CD8-positive, alpha-beta memory T cell (primary cell): ENCODE measurements at regions of chr15 and their contacts with region 1.

Region 1: DNA sequence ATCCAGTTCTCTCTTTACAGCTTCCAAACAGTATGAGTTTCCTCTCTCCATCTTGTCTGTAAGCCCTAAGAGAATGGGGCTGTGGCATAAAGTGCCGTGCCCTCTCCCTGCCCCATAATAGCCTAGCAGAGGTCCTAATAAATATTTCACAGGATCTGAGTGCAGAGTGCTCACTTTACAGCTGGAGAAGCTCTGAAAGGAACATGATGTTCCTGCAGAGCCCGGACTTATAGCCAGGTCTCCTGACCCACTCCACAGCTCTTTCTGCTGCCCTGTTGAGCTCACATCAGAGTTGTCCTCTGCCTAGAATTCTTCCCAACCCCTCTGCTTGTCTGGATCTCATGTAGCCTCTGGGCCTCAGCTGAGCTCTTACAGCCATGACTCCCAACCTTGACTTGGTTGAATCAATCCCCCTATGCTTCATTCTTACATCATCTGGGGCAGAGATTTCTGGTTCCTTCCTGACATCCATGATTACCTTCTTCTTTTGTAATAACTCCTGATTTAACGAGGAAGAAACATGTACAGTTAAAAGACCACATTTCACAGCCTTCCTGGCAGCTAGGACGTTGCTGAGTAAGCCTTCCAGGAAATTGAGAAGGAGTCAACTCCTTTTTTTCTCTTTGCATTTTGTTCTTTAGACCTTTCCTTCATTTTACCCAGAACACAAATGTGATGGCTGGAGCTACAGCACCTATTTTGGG is 135.3 kb downstream of the RPLP1 start:
- DNase-seq: peak in 1 of 5 donors; percentile 1
- H3K4me3 ChIP-seq: no peak overlapping the region
- H3K4me3 Mint-ChIP-seq: no peak overlapping the region
- H3K27ac ChIP-seq: no peak overlapping the region
- H3K27ac Mint-ChIP-seq: peak overlapping the region in 1 of 8 donors; percentile 77
- H3K4me1 ChIP-seq: no peaks in the 10 kb centered on the region
- H3K4me1 Mint-ChIP-seq: peaks cover 7 to 11% (median 10%) of the 10 kb centered on the region in 3 donors
- H3K27me3 ChIP-seq: no peaks in the 10 kb centered on the region
- H3K27me3 Mint-ChIP-seq: peaks cover 0 to 1% of the 10 kb centered on the region in 2 donors

Region 2: GRCh38 chr15:69014454-69014853 is 573.4 kb before region 1 on chr15 and contains the start of gene NOX5:
- CTCF ChIA-PET with region 1: no interaction called
- POLR2A ChIA-PET with region 1: no interaction called
- DNase-seq: no peak
- H3K4me3 ChIP-seq: no peak within 1 kb of the TSS
- H3K4me3 Mint-ChIP-seq: no peak within 1 kb of the TSS
- H3K27ac ChIP-seq: no peak within 1 kb of the TSS
- H3K27ac Mint-ChIP-seq: no peak within 1 kb of the TSS
- H3K4me1 ChIP-seq: no peaks in the 10 kb centered on the region
- H3K4me1 Mint-ChIP-seq: no peaks in the 10 kb centered on the region
- H3K27me3 ChIP-seq: no peaks in the 10 kb centered on the region
- H3K27me3 Mint-ChIP-seq: peaks cover 24 to 31% of the 10 kb centered on the region in 2 donors
- total RNA-seq, gene NOX5: not detected

Region 3: GRCh38 chr15:69576035-69576526 is 11.8 kb before region 1 on chr15:
- CTCF ChIA-PET with region 1: interaction called, 13 read pairs
- POLR2A ChIA-PET with region 1: no interaction called
- DNase-seq: peak; percentile 47 to 80 (median 51)
- H3K4me3 ChIP-seq: no peak overlapping the region
- H3K4me3 Mint-ChIP-seq: peak overlapping the region in 1 of 7 donors; percentile 14
- H3K27ac ChIP-seq: no peak overlapping the region
- H3K27ac Mint-ChIP-seq: peak overlapping the region in 2 of 8 donors; percentile 62 to 85
- H3K4me1 ChIP-seq: peaks cover 22% of the 10 kb centered on the region
- H3K4me1 Mint-ChIP-seq: peaks cover 22 to 37% (median 31%) of the 10 kb centered on the region in 3 donors
- H3K27me3 ChIP-seq: no peaks in the 10 kb centered on the region
- H3K27me3 Mint-ChIP-seq: peaks cover 0 to 2% of the 10 kb centered on the region in 2 donors